ENCODE measurements at regions of chr5 and their contacts with region 1.

Region 1: DNA sequence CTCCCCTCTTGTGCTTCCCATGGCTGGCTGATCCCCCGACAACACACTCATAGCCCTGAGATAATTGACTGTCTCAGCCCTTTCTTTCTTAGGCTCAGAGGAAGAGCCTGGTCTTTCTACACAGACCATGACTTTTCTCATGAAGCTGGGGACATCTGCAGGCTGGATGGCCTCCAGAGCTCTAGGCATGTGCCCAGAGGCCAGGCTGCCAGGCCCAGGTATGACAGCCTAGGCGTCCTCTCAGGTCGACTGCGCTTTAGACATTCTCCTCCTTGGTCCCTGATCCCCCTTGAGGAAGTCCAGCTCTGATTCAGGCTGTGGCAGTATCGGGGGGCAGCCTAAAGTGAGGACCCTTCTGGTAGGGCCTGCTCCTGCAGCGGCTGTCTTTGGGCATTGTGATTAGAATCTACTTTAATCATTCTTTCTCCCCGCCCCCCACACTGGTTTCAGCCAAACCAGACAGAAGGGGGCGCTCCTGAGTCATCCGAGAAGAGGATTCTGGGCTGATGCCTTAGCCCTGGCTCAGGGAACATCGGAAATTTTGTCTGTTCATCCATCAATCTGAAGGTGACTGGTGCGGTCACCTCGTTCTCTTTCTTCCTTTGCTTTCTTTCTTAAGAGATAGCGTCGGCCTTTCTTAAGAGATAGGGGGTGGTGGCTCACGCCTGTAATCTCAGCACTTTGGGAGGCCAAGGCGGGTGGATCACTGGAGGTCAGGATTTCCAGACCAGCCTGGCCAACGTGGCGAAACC is 66.5 kb upstream of the HSPA9 start:
- DNase-seq: peak; percentile 74
- H3K4me3 ChIP-seq: peak overlapping the region in 1 of 2 experiments; percentile 44; a peak in 1 of 4 replicates
- H3K27ac ChIP-seq: no peak overlapping the region
- H3K4me1 ChIP-seq: peaks cover 0 to 19% of the 10 kb centered on the region in 2 experiments; a peak in 1 of 4 replicates
- H3K27me3 ChIP-seq: no peaks in the 10 kb centered on the region; the same call in 1 of the 2 replicates
- CTCF ChIP-seq: peak; percentile 91
- EP300 ChIP-seq: no peak
- RAD21 ChIP-seq: peak; percentile 87

Region 2: GRCh38 chr5:138583984-138584637 is 57.6 kb before region 1 on chr5:
- CTCF ChIA-PET with region 1: interaction called, 12 read pairs
- POLR2A ChIA-PET with region 1: no interaction called
- DNase-seq: no peak
- H3K4me3 ChIP-seq: no peak overlapping the region
- H3K27ac ChIP-seq: no peak overlapping the region
- H3K4me1 ChIP-seq: no peaks in the 10 kb centered on the region
- H3K27me3 ChIP-seq: no peaks in the 10 kb centered on the region
- CTCF ChIP-seq: no peak
- EP300 ChIP-seq: no peak
- RAD21 ChIP-seq: no peak

Region 3: DNA sequence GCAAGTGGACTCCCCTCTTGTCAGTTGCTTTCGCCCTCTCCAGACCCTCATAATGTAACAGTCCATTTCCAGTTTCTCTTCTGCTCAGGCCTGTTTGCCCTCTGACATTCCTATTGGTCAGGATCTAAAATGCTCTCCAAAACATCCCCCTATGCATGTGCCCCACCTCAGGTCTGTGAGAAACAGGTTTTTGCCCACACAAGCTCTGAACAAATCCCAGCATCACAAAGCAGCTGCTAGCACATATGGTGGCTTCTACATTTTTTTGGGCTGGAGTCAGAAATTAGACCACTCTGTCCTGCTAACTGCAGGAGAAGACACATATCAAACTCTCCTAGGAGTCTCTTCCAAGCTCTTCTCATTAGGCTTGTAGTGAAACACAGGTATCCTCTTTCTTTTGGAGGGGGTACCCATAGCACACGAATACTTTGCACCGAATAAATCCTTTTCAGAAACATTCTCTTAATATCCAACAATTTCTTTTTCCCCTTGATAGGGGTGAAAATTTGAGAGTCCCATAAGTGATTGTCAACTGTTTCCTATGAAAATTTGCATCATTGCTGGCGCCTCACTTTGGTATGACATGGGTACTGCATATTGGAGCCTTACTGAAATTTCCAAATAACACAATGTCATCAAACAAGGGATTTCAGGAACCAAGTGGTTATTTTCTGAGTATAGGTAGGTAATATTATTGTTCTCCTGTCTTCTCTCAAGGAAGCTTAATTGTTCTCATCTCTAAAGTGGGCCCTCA is 47.2 kb before region 1 on chr5:
- CTCF ChIA-PET with region 1: interaction called, 12 read pairs
- POLR2A ChIA-PET with region 1: no interaction called
- DNase-seq: no peak
- H3K4me3 ChIP-seq: no peak overlapping the region; a peak in 1 of 4 replicates
- H3K27ac ChIP-seq: no peak overlapping the region
- H3K4me1 ChIP-seq: peaks cover 0 to 2% of the 10 kb centered on the region in 2 experiments; a peak in 1 of 4 replicates
- H3K27me3 ChIP-seq: peaks cover 5% of the 10 kb centered on the region; the same call in 1 of the 2 replicates
- CTCF ChIP-seq: peak; percentile 54
- EP300 ChIP-seq: no peak
- RAD21 ChIP-seq: no peak

Region 4: GRCh38 chr5:138654281-138654867 is 12.7 kb after region 1 on chr5:
- CTCF ChIA-PET with region 1: interaction called, 29 read pairs
- POLR2A ChIA-PET with region 1: no interaction called
- DNase-seq: no peak
- H3K4me3 ChIP-seq: no peak overlapping the region
- H3K27ac ChIP-seq: no peak overlapping the region
- H3K4me1 ChIP-seq: peaks cover 0 to 20% of the 10 kb centered on the region in 2 experiments; a peak in 2 of 4 replicates
- H3K27me3 ChIP-seq: no peaks in the 10 kb centered on the region
- CTCF ChIP-seq: no peak
- EP300 ChIP-seq: no peak
- RAD21 ChIP-seq: no peak

Region 5: GRCh38 chr5:138668376-138669079 is 26.8 kb after region 1 on chr5:
- CTCF ChIA-PET with region 1: no interaction called
- POLR2A ChIA-PET with region 1: no interaction called
- DNase-seq: no peak
- H3K4me3 ChIP-seq: no peak overlapping the region
- H3K27ac ChIP-seq: no peak overlapping the region
- H3K4me1 ChIP-seq: no peaks in the 10 kb centered on the region
- H3K27me3 ChIP-seq: no peaks in the 10 kb centered on the region
- CTCF ChIP-seq: no peak
- EP300 ChIP-seq: no peak
- RAD21 ChIP-seq: no peak

Measured in SK-N-SH (cell line).